H1 (cell line): ENCODE measurements at regions of chr3 and their contacts with region 1.

Region 1: GRCh38 chr3:56347219-56347871 is 120.9 kb downstream of the ERC2 start:
- DNase-seq: peak; percentile 44 to 96
- H3K4me3 ChIP-seq: no peak overlapping the region
- H3K27ac ChIP-seq: no peak overlapping the region
- H3K4me1 ChIP-seq: peaks cover 0 to 3% (median 1%) of the 10 kb centered on the region in 4 experiments; a peak in 3 of 7 replicates
- H3K27me3 ChIP-seq: no peaks in the 10 kb centered on the region
- CTCF ChIP-seq: peak; percentile 90 to 97 (median 97)
- EP300 ChIP-seq: no peak
- POLR2A ChIP-seq: no peak
- RAD21 ChIP-seq: peak; percentile 88 to 91

Region 2: GRCh38 chr3:56389183-56389830 is 42.0 kb after region 1 on chr3:
- CTCF ChIA-PET with region 1: interaction called, 11 read pairs
- POLR2A ChIA-PET with region 1: no interaction called
- DNase-seq: no peak
- H3K4me3 ChIP-seq: no peak overlapping the region
- H3K27ac ChIP-seq: no peak overlapping the region
- H3K4me1 ChIP-seq: no peaks in the 10 kb centered on the region
- H3K27me3 ChIP-seq: no peaks in the 10 kb centered on the region
- CTCF ChIP-seq: no peak
- EP300 ChIP-seq: no peak
- POLR2A ChIP-seq: no peak
- RAD21 ChIP-seq: no peak

Region 3: DNA sequence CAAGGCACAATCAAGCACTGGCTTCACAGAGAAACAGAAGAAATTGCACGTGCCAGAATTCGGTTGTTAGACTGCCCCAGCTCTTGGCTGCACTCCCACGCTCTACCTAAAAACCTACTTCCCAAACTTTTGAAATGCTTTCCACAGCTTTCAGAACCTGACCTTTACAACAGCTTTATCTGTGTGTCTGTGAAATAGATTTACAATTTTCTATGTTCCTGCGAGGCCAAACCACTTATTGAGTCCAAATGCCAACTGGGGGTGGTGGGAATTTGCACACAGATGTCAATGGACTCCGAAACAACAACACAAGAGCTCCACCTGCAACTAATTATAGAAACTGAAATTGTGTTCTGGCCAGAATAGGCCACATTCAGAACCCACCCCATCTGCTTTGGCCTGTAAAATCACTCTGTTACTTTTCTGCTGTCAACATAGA is 76.3 kb after region 1 on chr3:
- CTCF ChIA-PET with region 1: interaction called, 17 read pairs
- POLR2A ChIA-PET with region 1: no interaction called
- DNase-seq: no peak
- H3K4me3 ChIP-seq: no peak overlapping the region
- H3K27ac ChIP-seq: no peak overlapping the region
- H3K4me1 ChIP-seq: peaks cover 0 to 9% (median 0%) of the 10 kb centered on the region in 4 experiments; a peak in 1 of 7 replicates
- H3K27me3 ChIP-seq: no peaks in the 10 kb centered on the region
- CTCF ChIP-seq: no peak
- EP300 ChIP-seq: no peak
- POLR2A ChIP-seq: no peak
- RAD21 ChIP-seq: no peak

Region 4: DNA sequence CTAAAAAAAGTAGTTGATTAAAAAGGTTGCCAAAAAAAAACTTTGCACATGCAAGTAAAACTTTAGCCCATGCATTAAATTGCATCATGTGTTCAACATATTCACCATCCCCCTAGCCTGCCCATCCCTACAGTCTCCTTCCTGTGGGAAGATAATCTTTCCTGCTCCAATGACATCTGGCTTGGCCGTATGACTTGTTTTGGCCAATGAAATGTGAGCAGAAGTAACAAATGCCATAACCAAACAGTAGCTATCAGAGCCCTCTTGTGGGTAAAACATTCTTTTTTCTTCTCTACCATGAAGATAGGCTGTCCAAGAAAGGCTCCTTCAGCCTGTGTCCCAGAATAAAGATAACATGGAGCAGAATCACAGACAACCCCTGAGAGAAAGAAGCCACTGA is 105.7 kb after region 1 on chr3:
- CTCF ChIA-PET with region 1: interaction called, 133 read pairs
- POLR2A ChIA-PET with region 1: no interaction called
- DNase-seq: no peak
- H3K4me3 ChIP-seq: no peak overlapping the region
- H3K27ac ChIP-seq: no peak overlapping the region
- H3K4me1 ChIP-seq: no peaks in the 10 kb centered on the region
- H3K27me3 ChIP-seq: no peaks in the 10 kb centered on the region
- CTCF ChIP-seq: no peak
- EP300 ChIP-seq: no peak
- POLR2A ChIP-seq: no peak
- RAD21 ChIP-seq: no peak

Region 5: GRCh38 chr3:56476771-56477170 is 129.4 kb after region 1 on chr3:
- CTCF ChIA-PET with region 1: interaction called, 10 read pairs
- POLR2A ChIA-PET with region 1: no interaction called
- DNase-seq: no peak
- H3K4me3 ChIP-seq: 0 out of 8 replicates have a peak overlapping the region, but pooled peaks of 1 of the 4 experiments have one; percentile 9
- H3K27ac ChIP-seq: no peak overlapping the region
- H3K4me1 ChIP-seq: peaks cover 0 to 4% (median 1%) of the 10 kb centered on the region in 4 experiments; a peak in 2 of 7 replicates
- H3K27me3 ChIP-seq: no peaks in the 10 kb centered on the region
- CTCF ChIP-seq: no peak
- EP300 ChIP-seq: no peak
- POLR2A ChIP-seq: no peak
- RAD21 ChIP-seq: no peak